CD8-positive, alpha-beta T cell (primary cell): ENCODE measurements at regions of chr6 and their contacts with region 1.

Region 1: DNA sequence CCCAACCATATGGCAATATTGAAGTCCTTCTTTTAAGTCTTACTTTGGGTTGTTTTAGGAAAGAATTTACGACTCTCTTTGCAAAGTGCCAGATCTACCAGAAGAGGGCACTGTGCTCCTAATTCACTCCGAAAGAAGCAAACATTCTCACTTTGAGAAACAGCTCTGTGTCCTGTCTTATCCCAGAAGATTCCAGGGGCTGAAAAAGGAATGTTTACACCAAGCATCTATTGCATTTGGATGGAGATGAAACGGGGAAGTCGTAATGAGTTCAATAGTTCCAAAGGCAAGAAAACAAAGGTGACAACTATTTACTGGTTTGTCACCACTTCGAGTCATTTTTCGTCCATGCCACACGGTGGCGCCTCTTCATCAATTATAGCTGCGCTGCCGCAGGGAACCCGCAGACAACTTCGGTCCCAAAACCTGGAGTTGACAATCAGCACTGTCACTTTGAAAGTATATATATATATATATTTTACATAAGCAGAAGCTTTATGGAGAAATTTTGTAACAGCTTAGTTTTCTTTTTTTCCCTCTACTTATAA is 121.6 kb downstream of the MOXD1 start:
- DNase-seq: peak; percentile 39 to 82 (median 66)
- ATAC-seq: peak; percentile 90
- H3K4me3 ChIP-seq: peak overlapping the region; percentile 33 to 51
- H3K4me3 Mint-ChIP-seq: peak overlapping the region; percentile 80
- H3K27ac ChIP-seq: no peak overlapping the region
- H3K27ac Mint-ChIP-seq: no peak overlapping the region
- H3K4me1 ChIP-seq: no peaks in the 10 kb centered on the region
- H3K4me1 Mint-ChIP-seq: no peaks in the 10 kb centered on the region
- H3K27me3 ChIP-seq: peaks cover 0 to 3% of the 10 kb centered on the region in 2 experiments
- H3K27me3 Mint-ChIP-seq: peaks cover 26% of the 10 kb centered on the region
- CTCF ChIP-seq: peak; percentile 100

Region 2: DNA sequence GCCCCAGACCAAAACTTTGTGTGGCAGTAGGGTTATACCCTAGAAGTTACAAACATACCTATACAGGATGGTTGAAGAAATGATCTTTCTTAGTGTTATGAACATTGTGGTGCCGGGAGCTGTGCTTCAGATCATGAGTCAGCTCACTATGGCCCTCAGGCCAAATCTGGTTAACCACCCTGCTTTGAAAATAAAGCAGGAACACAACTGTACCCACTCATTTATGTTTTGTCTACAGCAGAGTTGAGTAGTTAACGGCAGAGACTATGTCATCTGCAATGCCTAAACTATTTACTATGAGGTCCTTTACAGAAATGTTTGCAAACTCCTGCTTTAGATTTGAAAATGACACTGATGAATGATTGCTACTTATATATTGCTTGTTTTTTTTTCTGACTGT is 1120.1 kb before region 1 on chr6:
- CTCF ChIA-PET with region 1: no interaction called
- POLR2A ChIA-PET with region 1: no interaction called
- intact Hi-C with region 1: no loop called
- DNase-seq: no peak
- ATAC-seq: no peak
- H3K4me3 ChIP-seq: no peak overlapping the region
- H3K4me3 Mint-ChIP-seq: no peak overlapping the region
- H3K27ac ChIP-seq: no peak overlapping the region
- H3K27ac Mint-ChIP-seq: no peak overlapping the region
- H3K4me1 ChIP-seq: no peaks in the 10 kb centered on the region
- H3K4me1 Mint-ChIP-seq: no peaks in the 10 kb centered on the region
- H3K27me3 ChIP-seq: no peaks in the 10 kb centered on the region
- H3K27me3 Mint-ChIP-seq: no peaks in the 10 kb centered on the region
- CTCF ChIP-seq: no peak

Region 3: DNA sequence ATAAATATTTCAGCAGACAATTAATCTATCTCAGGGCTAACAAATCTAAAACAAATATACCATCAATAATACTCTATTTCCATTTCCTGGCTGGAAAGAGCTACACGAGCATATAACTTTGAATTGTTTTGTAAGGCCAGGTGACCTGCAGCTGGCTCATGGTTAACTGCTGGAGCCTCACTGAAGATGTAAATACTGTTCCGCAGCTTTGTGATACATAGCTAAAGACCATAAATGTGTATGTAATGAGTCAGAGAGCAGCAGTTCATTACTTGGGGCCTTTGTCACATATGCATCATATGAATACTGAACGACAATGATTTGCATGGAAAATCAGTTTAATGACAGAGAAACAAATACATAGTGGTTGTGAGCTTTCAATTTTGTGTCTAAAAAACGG is 219.1 kb before region 1 on chr6:
- CTCF ChIA-PET with region 1: no interaction called
- POLR2A ChIA-PET with region 1: no interaction called
- intact Hi-C with region 1: no loop called
- DNase-seq: no peak
- ATAC-seq: no peak
- H3K4me3 ChIP-seq: no peak overlapping the region
- H3K4me3 Mint-ChIP-seq: no peak overlapping the region
- H3K27ac ChIP-seq: no peak overlapping the region
- H3K27ac Mint-ChIP-seq: no peak overlapping the region
- H3K4me1 ChIP-seq: no peaks in the 10 kb centered on the region
- H3K4me1 Mint-ChIP-seq: no peaks in the 10 kb centered on the region
- H3K27me3 ChIP-seq: no peaks in the 10 kb centered on the region
- H3K27me3 Mint-ChIP-seq: no peaks in the 10 kb centered on the region
- CTCF ChIP-seq: no peak

Region 4: GRCh38 chr6:132259070-132259469 is 20.6 kb before region 1 on chr6:
- CTCF ChIA-PET with region 1: interaction called, 15 read pairs
- POLR2A ChIA-PET with region 1: no interaction called
- intact Hi-C with region 1: no loop called
- DNase-seq: no peak
- ATAC-seq: no peak
- H3K4me3 ChIP-seq: no peak overlapping the region
- H3K4me3 Mint-ChIP-seq: no peak overlapping the region
- H3K27ac ChIP-seq: no peak overlapping the region
- H3K27ac Mint-ChIP-seq: no peak overlapping the region
- H3K4me1 ChIP-seq: no peaks in the 10 kb centered on the region
- H3K4me1 Mint-ChIP-seq: no peaks in the 10 kb centered on the region
- H3K27me3 ChIP-seq: no peaks in the 10 kb centered on the region
- H3K27me3 Mint-ChIP-seq: peaks cover 14% of the 10 kb centered on the region
- CTCF ChIP-seq: no peak

Region 5: GRCh38 chr6:132289756-132290155 is 10.1 kb after region 1 on chr6:
- CTCF ChIA-PET with region 1: interaction called, 77 read pairs
- POLR2A ChIA-PET with region 1: interaction called, 3 read pairs
- intact Hi-C with region 1: no loop called
- DNase-seq: no peak
- ATAC-seq: no peak
- H3K4me3 ChIP-seq: no peak overlapping the region
- H3K4me3 Mint-ChIP-seq: no peak overlapping the region
- H3K27ac ChIP-seq: no peak overlapping the region
- H3K27ac Mint-ChIP-seq: no peak overlapping the region
- H3K4me1 ChIP-seq: no peaks in the 10 kb centered on the region
- H3K4me1 Mint-ChIP-seq: no peaks in the 10 kb centered on the region
- H3K27me3 ChIP-seq: peaks cover 0 to 2% of the 10 kb centered on the region in 2 experiments
- H3K27me3 Mint-ChIP-seq: no peaks in the 10 kb centered on the region
- CTCF ChIP-seq: no peak

Region 6: GRCh38 chr6:132300323-132300949 is 20.8 kb after region 1 on chr6:
- CTCF ChIA-PET with region 1: interaction called, 50 read pairs
- POLR2A ChIA-PET with region 1: no interaction called
- intact Hi-C with region 1: loop called in 1 of 2 experiments (anchors 1 kb)
- DNase-seq: peak in 2 of 9 experiments; percentile 35 to 39
- ATAC-seq: no peak
- H3K4me3 ChIP-seq: no peak overlapping the region
- H3K4me3 Mint-ChIP-seq: no peak overlapping the region
- H3K27ac ChIP-seq: no peak overlapping the region
- H3K27ac Mint-ChIP-seq: no peak overlapping the region
- H3K4me1 ChIP-seq: no peaks in the 10 kb centered on the region
- H3K4me1 Mint-ChIP-seq: no peaks in the 10 kb centered on the region
- H3K27me3 ChIP-seq: no peaks in the 10 kb centered on the region
- H3K27me3 Mint-ChIP-seq: peaks cover 13% of the 10 kb centered on the region
- CTCF ChIP-seq: peak; percentile 24

Region 7: DNA sequence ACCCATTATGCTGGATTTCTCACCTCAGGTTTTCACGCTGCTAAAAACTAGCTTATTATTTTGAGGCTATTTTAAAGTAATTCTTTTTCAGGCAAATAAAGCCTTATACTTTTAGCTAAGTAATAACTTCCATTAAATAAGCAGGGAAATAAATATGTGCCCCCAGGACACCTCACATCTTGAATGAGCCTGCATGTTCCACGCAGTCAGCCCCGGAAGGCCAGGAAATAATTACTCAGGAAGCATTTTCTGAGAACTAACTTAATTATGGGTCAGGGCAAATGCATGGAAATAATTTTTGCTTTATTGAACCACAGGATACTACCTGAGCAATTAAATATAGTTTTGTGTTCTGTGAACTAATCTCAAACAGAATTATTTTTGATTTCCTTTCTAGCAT is 192.1 kb after region 1 on chr6:
- CTCF ChIA-PET with region 1: interaction called, 16 read pairs
- POLR2A ChIA-PET with region 1: interaction called, 3 read pairs
- intact Hi-C with region 1: no loop called
- DNase-seq: no peak
- ATAC-seq: no peak
- H3K4me3 ChIP-seq: no peak overlapping the region
- H3K4me3 Mint-ChIP-seq: no peak overlapping the region
- H3K27ac ChIP-seq: no peak overlapping the region
- H3K27ac Mint-ChIP-seq: no peak overlapping the region
- H3K4me1 ChIP-seq: no peaks in the 10 kb centered on the region
- H3K4me1 Mint-ChIP-seq: no peaks in the 10 kb centered on the region
- H3K27me3 ChIP-seq: no peaks in the 10 kb centered on the region
- H3K27me3 Mint-ChIP-seq: no peaks in the 10 kb centered on the region
- CTCF ChIP-seq: no peak

Region 8: GRCh38 chr6:132483779-132484679 is 204.4 kb after region 1 on chr6:
- CTCF ChIA-PET with region 1: interaction called, 163 read pairs
- POLR2A ChIA-PET with region 1: interaction called, 8 read pairs
- intact Hi-C with region 1: loop called (anchors 1 kb)
- DNase-seq: peak in 6 of 9 experiments; percentile 12 to 78 (median 44)
- ATAC-seq: peak; percentile 71
- H3K4me3 ChIP-seq: no peak overlapping the region
- H3K4me3 Mint-ChIP-seq: no peak overlapping the region
- H3K27ac ChIP-seq: no peak overlapping the region
- H3K27ac Mint-ChIP-seq: no peak overlapping the region
- H3K4me1 ChIP-seq: no peaks in the 10 kb centered on the region
- H3K4me1 Mint-ChIP-seq: peaks cover 11% of the 10 kb centered on the region
- H3K27me3 ChIP-seq: no peaks in the 10 kb centered on the region
- H3K27me3 Mint-ChIP-seq: no peaks in the 10 kb centered on the region
- CTCF ChIP-seq: peak; percentile 90